ENCODE measurements at regions of chr6 and their contacts with region 1.

Region 1: GRCh38 chr6:14046476-14047068 is 71.0 kb upstream of the CD83 start:
- DNase-seq: peak; percentile 45
- H3K4me3 ChIP-seq: no peak overlapping the region
- CTCF ChIP-seq: peak; percentile 84

Region 2: DNA sequence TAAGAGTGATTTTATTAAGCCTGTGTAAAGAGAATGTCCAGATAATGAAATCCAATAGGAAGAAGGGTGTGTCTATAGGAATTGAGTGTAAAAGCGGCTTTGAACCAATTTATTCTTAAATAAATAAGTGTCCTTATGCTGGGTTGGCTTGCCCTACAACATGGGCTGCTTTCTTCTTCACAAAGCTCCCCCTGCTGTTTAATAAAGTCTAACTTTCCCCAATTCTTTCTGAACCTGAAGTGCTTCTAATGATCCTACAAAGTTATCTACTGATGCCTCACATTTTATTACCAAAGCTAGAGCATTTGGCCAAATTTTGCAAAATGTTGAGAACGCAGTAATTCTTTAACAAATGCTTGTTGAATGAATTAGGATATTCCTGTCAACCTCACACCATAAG is 508.5 kb before region 1 on chr6:
- in situ Hi-C with region 1: no loop called
- DNase-seq: peak; percentile 60
- H3K4me3 ChIP-seq: no peak overlapping the region
- CTCF ChIP-seq: peak; percentile 36

Region 3: DNA sequence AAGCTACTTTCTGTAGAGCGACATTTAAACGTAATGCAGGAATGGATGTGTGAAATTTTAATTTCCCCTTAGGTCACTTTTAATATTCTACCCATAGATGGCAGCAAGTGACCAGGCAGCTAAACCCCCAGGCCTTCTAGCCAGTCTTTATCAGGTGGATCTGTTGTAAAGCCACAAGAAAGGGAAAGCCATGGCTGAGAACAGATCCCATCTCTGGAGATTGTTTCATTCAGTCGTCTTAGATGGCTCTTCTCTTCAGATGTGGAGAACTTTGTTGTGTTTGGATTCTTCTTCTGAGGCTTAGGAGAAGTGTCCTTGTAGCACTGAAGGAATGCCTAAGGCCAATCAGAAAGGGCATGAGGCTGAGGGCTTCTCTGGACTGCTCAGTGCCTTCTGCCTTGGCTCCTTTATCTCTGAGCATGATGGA is 137.6 kb before region 1 on chr6:
- in situ Hi-C with region 1: loop called (anchors 25 kb)
- DNase-seq: peak; percentile 81
- H3K4me3 ChIP-seq: no peak overlapping the region
- CTCF ChIP-seq: peak; percentile 64

Region 4: DNA sequence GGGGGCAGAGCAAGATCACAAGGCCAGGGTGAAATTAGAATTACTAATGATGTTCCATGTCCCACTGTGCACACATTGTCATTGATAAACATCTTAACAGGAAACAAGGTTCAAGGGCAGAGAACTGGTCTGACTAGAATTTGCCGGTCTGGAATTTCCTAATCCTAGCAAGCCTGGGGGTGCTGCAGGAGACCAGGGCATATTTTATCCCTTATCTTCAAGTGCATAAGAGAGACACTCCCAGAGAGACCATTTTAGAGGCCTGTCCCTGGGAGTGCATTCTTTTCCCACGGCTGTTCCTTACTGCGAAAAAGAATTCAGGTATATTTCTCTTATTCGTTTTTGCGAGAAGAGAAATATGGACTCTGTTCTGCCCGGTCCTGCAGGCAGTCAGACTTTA is 112.5 kb after region 1 on chr6:
- in situ Hi-C with region 1: no loop called
- DNase-seq: no peak
- H3K4me3 ChIP-seq: no peak overlapping the region
- CTCF ChIP-seq: no peak